ENCODE measurements at regions of chr21 and their contacts with region 1.

Region 1: GRCh38 chr21:21788591-21788990 is 790.4 kb downstream of the NCAM2 start:
- DNase-seq: no peak
- ATAC-seq: no peak
- H3K4me3 ChIP-seq: no peak overlapping the region
- H3K4me3 Mint-ChIP-seq: no peak overlapping the region
- H3K27ac ChIP-seq: no peak overlapping the region
- H3K27ac Mint-ChIP-seq: no peak overlapping the region
- H3K4me1 ChIP-seq: no peaks in the 10 kb centered on the region
- H3K4me1 Mint-ChIP-seq: no peaks in the 10 kb centered on the region
- H3K27me3 ChIP-seq: no peaks in the 10 kb centered on the region
- H3K27me3 Mint-ChIP-seq: no peaks in the 10 kb centered on the region
- CTCF ChIP-seq: no peak

Region 2: DNA sequence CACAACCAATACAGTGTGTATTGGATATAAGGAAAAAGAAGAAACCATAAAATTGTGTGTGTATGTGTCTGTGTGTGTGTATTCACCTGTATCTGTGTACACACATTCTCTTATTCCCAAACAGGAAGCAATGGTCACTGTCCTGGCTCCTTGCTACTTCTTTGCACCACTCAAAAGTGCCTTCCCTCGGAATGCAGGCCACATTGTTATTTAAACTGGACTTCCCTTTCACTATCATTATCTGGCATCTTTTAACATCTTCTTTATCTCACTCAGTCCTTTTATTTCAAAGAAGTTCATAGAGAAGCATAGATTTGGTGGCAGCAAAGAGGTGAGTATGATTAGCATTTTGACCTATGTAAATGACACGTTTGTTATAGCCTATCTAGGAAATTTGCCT is 13.3 kb after region 1 on chr21:
- CTCF ChIA-PET with region 1: interaction called, 4 read pairs
- POLR2A ChIA-PET with region 1: no interaction called
- intact Hi-C with region 1: loop called in 1 of 2 experiments (anchors 1 kb)
- DNase-seq: no peak
- ATAC-seq: no peak
- H3K4me3 ChIP-seq: no peak overlapping the region
- H3K4me3 Mint-ChIP-seq: no peak overlapping the region
- H3K27ac ChIP-seq: no peak overlapping the region
- H3K27ac Mint-ChIP-seq: no peak overlapping the region
- H3K4me1 ChIP-seq: no peaks in the 10 kb centered on the region
- H3K4me1 Mint-ChIP-seq: no peaks in the 10 kb centered on the region
- H3K27me3 ChIP-seq: no peaks in the 10 kb centered on the region
- H3K27me3 Mint-ChIP-seq: no peaks in the 10 kb centered on the region
- CTCF ChIP-seq: no peak

Region 3: DNA sequence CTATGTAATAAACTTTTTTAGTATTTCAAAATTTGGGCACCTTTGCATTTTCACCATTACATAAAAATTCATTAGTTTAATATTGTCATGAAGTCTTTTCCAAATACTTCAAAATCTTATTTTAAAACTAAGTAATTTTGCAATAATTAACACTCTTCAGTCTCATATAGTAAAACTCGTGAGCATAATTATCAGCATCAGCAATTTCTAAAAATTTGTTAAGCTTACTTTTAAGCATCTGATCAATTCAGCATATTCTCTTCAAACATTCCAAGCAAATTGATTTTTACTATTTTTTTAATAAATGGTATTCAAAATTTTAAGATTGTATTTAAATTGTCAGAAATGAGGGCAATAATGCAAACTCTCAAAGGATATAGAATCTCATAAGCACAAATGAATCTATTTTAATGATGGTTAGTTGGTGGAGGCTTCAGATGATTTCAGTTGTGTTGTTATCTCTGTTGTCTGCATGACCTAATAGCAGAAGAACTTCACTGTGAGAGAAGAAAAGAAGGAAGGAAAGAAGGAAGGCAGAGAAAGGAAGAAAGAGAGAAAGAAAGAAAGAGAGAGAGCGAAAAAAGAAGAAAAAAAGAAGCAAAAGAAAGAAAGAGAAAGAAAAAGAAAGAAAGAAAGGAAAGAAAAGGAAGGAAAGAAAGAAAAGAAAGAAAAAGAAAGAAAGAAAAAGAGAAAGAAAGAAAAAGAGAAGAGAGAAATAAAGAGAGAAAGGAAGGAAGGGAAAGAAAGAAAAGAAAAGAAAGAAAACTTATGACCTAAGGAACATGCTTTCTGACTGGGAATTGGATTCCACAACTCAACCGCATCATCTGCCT is 70.1 kb after region 1 on chr21:
- CTCF ChIA-PET with region 1: no interaction called
- POLR2A ChIA-PET with region 1: no interaction called
- intact Hi-C with region 1: loop called in 1 of 2 experiments (anchors 2 kb)
- DNase-seq: no peak
- ATAC-seq: no peak
- H3K4me3 ChIP-seq: no peak overlapping the region
- H3K4me3 Mint-ChIP-seq: no peak overlapping the region
- H3K27ac ChIP-seq: no peak overlapping the region
- H3K27ac Mint-ChIP-seq: no peak overlapping the region
- H3K4me1 ChIP-seq: no peaks in the 10 kb centered on the region
- H3K4me1 Mint-ChIP-seq: no peaks in the 10 kb centered on the region
- H3K27me3 ChIP-seq: no peaks in the 10 kb centered on the region
- H3K27me3 Mint-ChIP-seq: no peaks in the 10 kb centered on the region
- CTCF ChIP-seq: no peak